ENCODE measurements at regions of chr22 and their contacts with region 1.

Region 1: DNA sequence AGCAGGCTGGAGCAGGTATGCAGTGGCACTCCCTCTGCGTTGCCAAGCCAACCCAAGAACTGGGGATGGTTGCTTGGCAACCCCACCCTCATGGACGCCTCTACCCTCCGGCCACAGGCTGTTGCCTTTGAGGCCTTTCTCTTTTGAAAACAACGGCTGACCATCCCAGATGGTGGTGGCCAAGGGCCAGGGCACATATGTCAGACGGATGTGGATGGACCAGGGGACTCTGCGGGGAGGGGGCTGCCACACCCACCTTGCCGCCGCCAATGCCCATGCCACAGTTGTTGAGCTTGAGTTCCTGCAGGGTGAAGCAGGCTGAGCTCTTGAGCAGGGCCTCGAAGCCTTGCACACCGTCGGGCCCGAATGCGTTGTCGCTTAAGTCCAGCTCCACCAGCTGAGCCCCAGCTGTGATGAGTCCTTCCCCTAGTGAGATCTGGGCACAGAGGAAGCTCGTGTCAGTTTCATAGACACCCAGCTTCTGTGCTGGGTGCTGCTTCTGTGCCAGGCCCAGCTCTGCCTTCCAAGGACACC is 21.5 kb downstream of the RANGAP1 start:
- DNase-seq: peak; percentile 13
- ATAC-seq: no peak

Region 2: DNA sequence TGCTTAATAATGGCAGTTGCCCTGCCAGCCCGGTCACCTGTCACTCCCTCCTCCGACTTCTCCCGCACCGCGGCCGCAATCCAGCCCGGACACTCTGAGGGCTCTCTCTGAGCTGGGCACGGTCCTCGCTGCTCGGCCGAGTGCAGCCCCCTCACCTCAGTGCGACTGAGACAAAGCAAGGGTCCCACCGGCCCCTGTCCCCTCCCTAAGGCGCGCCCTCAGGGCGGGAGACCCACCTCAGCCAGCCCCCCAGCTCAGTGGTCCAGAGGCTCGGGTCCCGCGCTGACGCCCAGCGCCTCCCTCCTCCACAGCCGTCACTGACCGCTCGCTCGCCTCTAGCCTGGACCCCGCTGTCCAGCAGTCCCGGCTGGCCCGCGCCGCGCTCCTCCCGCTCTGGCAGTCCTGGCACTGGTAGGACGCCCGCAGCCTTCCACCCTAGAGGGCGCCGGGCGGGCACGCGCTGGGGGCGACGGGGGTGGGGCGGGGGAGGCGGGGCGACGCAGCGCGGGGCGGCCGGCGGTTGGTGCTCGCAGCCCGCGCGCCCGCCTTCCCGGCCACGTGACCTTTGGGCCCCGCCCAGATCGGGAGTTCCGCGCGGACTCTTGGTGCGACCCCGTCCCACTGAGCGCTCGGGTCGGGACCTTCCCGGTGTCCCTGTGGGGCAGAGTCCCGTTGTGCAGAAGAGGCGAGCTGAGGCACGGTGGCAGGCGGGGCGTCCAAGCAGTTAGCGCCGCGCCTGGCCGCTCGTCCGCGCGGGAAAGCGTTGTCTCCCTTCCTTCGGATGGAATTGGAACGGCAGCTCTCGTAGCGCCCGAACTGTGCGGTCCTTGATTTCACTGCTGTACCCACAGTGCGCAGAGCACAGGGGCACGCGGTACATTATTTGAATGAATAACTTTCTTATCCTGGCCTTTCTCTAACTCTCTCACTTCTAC is 67.2 kb before region 1 on chr22:
- intact Hi-C with region 1: loop called (anchors 5 kb)
- DNase-seq: peak; percentile 92
- ATAC-seq: peak; percentile 95

Region 3: GRCh38 chr22:41242396-41243117 is 21.9 kb before region 1 on chr22:
- intact Hi-C with region 1: loop called (anchors 1 kb)
- DNase-seq: no peak
- ATAC-seq: no peak

Region 4: DNA sequence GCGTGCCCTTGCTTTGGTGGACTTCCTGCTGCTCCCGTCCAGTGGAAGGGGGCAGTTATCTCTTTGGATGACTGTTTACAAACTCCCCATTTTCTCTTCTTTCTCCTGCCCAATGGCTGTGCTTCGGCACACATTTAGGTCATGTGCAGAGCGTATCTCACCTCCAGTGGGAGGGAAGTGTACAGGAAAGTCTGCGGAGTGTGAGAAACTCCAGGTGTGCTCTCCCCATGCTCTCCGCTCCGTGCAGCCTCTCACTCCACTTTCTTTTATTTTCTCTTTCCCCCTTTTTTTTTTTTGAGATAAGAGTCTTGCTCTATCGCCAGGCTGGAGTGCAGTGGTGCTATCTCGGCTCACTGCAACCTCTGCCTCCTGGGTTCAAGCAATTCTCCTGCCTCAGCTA is 105.4 kb after region 1 on chr22:
- intact Hi-C with region 1: no loop called
- DNase-seq: no peak
- ATAC-seq: no peak

Region 5: DNA sequence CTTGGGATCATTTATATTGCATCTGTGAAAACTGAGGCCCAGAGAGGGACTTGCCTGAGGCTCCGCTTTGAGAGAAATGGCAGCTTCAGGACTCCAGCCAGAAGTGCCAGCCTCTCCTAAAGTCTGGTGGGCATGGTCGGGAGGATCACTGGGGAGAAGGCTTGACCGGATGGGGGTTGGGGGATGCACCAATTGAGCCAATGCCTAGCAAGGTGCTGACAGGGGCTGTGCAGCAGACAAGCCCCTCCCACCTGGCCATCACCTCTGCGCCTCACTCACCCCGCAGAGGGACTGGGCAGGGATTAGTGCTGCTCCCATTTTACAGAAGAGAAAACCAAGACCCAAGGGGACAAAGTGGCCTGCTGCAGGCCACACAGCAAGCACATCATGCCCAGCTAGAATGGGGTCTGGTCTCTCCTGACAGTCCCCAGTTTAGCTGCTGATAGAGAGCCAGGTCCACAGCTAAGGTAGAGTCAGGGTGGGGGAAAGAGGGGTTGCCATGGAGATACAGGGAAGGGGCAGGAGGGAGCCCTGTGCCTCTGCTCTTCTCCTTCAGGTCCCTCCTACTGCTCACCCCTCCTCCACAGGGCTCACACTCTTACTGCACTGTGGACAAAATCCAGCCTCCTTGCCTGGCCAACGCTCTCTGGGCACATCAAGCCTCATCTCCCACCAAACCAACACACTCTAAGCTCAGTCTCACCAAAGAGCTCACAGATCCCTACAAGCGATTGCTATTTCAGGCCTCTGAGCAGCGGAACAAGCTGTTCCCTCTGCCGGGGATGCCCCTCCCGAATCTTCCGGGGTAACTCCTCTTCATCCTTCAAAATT is 146.8 kb after region 1 on chr22:
- intact Hi-C with region 1: loop called (anchors 2 kb)
- DNase-seq: no peak
- ATAC-seq: peak; percentile 12

Measured in Right ventricle myocardium inferior (tissue), 1 donor.